Breast epithelium (tissue), 4 donors: ENCODE measurements at regions of chr6 and their contacts with region 1.

Region 1: DNA sequence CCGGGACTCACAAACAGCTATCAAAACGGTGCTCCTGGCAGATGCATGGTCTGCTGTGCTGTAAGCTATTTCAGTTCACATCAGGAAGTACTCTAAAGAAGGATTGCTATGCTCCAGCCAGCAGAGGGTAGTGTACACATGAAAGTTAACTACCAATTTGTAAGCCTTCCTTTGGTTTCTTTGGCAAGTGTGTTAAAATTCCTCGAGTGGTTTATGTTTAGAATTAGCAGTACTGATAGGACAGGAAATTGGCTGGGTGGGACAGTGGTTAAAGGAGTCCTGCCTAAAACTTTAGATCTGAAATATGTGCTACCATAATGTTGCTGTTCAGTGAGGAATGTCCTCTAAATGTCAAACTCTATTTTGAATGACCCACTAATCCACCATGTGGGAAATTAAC is 47.4 kb downstream of the TRMT11 start:
- DNase-seq: peak in 1 of 2 donors; percentile 19
- H3K4me3 ChIP-seq: no peak overlapping the region
- H3K27ac ChIP-seq: no peak overlapping the region
- H3K4me1 ChIP-seq: no peaks in the 10 kb centered on the region
- H3K27me3 ChIP-seq: no peaks in the 10 kb centered on the region
- CTCF ChIP-seq: peak in 2 of 3 donors; percentile 52 to 56
- POLR2A ChIP-seq: no peak

Region 2: DNA sequence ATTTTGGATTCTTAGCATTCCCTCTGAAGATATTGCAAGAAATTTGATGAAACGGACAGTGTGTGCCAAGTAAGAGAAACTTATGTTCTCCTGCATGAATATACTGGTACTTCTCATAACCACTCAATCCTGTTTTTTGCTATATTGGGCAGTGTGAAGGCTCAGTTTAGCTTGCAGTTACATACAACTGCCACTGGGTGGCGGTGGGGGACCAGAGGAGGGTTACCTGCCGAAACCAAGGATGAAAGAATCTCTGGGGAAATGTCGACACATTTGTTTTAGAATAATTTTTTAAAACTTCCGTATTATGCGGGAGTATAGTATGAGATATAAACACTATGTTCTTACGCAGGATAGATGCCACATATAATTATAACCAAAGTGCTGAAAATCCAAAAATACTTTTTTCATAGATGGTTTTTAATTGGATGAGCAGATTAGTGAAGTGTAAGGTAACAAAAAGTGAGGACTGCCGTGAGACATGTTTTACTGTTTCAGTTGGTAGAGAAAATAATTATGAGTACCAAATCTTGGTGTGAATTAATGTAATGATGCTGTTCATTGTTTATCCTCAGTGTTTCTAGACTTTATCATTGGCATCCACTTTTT is 37.6 kb before region 1 on chr6:
- intact Hi-C with region 1: loop called (anchors 2 kb)
- DNase-seq: peak in 1 of 2 donors; percentile 61
- H3K4me3 ChIP-seq: peak overlapping the region in 2 of 3 donors; percentile 15 to 17
- H3K27ac ChIP-seq: no peak overlapping the region
- H3K4me1 ChIP-seq: no peaks in the 10 kb centered on the region
- H3K27me3 ChIP-seq: no peaks in the 10 kb centered on the region
- CTCF ChIP-seq: peak; percentile 81 to 90 (median 86)
- POLR2A ChIP-seq: no peak

Region 3: DNA sequence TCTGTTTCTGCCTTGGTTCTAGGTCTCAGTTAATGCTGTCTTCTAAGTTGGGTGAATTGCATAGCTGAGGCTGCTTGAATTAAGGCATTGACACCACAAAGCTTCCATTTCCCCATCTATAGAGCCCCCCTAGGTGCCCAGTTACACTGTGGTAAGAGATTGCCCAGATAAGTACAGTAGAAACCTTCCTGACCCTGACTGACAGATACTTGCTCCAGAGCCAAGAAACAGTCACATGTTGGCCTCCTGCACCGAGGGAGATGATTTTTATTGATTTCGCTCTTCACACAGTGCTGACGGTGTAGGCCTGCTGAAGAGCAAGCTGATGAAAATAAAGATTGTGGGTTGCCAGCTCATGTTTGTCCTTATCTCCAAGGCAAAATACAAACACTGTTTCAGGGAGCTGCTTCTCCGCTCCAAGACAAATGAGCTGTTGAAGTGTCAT is 20.6 kb after region 1 on chr6:
- intact Hi-C with region 1: no loop called
- DNase-seq: no peak
- H3K4me3 ChIP-seq: no peak overlapping the region
- H3K27ac ChIP-seq: no peak overlapping the region
- H3K4me1 ChIP-seq: no peaks in the 10 kb centered on the region
- H3K27me3 ChIP-seq: no peaks in the 10 kb centered on the region
- CTCF ChIP-seq: no peak
- POLR2A ChIP-seq: no peak